ENCODE measurements at regions of chr21 and their contacts with region 1.

Region 1: DNA sequence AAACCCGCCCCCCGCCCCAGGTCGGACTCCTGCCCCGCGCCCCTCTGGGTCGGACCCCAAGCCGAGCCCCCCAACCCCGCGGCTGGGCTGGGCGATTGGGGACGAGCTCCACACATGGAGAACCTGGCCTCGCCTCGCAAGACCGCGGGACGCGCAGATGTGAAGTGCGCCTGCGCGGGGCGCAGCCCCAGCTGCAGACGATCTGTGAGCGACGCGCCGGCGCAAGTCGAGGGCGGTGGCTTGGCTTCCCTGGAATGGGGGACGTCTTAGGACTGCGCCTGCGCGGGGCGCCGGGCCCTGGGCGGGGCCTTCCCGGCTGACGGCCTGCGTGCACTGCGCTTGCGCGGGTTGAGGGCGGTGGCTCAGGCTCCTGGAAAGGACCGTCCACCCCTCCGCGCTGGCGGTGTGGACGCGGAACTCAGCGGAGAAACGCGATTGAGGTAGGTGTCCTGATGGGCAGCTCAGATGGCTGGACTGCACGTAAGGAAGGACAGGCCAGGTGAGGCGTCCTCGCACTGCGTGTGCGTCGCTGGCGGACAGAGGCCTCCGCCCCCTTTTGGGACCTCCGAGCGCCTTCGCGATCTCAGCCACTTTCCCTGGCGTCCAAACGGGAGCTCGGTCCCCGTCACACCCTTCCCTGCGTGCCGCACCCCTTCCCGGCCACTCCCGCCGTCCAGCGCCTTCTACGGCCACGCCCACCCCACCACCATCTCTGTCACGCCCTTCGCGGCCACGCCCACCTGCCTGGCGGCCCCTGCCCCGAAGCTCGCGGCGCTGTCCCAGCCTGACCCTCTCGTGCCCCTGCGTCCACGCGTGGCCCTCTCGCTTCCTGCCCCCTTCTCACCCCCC is at the start of gene PRMT2:
- DNase-seq: peak; percentile 95 to 99 (median 98)
- ATAC-seq: peak; percentile 72 to 74
- H3K4me3 Mint-ChIP-seq: peak within 1 kb of the TSS; percentile 87 to 100 (median 97)
- H3K27ac Mint-ChIP-seq: peak within 1 kb of the TSS; percentile 93 to 100 (median 96)
- H3K4me1 Mint-ChIP-seq: peaks cover 33 to 83% (median 65%) of the 10 kb centered on the region in 4 donors
- H3K27me3 Mint-ChIP-seq: no peaks in the 10 kb centered on the region
- polyA plus RNA-seq, gene PRMT2: 358 to 485 (median 396) TPM

Region 2: DNA sequence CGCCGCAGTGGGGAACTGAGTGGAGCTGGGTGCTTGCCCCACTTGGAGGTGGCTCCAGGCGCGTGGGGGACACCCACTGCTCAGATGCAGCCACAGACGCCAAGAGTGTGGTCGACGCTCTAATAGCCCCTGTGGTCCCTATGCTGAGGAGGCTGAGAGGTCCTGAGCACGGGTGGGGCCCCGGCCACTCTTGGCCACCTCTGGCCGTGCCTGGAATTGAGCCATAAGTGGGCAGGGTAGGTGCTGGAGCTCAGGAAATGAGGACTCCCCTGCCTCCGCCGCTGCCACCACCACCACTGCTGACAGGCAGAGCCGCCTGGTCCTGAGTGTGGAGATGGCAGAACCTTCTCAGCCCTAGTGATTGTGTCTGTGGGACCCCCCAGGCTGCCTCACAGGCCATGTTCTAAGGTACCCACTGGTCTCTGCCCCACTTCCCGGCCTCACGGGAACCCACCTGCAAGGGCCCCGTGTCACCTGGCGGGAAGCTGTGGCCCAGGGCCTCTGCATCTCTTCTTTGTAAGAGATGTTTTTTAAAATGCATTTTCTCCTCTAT is 211.4 kb before region 1 on chr21:
- POLR2A ChIA-PET with region 1: interaction called, 31 read pairs
- DNase-seq: peak in 8 of 10 donors; percentile 25 to 74 (median 50)
- ATAC-seq: peak; percentile 27 to 54
- H3K4me3 Mint-ChIP-seq: peak overlapping the region; percentile 72 to 92 (median 88)
- H3K27ac Mint-ChIP-seq: peak overlapping the region; percentile 94 to 100 (median 99)
- H3K4me1 Mint-ChIP-seq: peaks cover 13 to 46% (median 43%) of the 10 kb centered on the region in 4 donors
- H3K27me3 Mint-ChIP-seq: no peaks in the 10 kb centered on the region

Region 3: DNA sequence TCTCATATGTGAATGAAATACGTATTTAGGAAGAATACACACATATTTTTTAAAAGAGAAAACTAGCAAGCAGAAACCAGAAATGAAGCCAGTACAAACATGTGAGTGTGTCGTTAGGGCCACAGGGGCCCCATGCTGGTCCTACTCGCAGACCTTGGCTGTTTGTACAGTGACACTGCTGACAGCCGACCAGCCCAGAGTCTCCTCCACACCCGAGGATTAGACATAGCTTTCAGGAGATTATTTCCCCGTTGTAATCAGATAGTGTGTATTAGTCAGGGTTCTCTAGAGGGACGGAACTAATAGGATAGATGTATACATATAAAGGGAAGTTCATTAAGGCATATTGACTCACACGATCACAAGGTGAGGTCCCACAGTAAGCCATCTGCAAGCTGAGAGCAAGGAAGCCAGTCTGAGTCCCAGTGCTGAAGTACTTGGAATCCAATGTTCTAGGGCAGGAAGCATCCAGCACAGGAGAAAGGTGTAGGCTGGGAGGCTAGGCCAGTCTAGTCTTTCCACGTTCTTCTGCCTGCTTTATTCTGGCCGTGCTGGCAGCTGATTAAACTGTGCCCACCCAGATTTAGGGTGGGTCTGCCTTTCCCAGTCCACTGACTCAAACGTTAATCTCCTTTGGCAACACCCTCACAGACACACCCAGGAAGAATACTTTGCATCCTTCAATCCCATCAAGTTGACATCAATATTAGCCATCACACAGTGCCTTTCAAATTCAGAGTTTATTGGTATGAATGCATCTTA is 125.6 kb before region 1 on chr21:
- POLR2A ChIA-PET with region 1: no interaction called
- DNase-seq: no peak
- ATAC-seq: no peak
- H3K4me3 Mint-ChIP-seq: no peak overlapping the region
- H3K27ac Mint-ChIP-seq: peak overlapping the region in 5 of 10 donors; percentile 16 to 78 (median 61)
- H3K4me1 Mint-ChIP-seq: peaks cover 0 to 41% (median 11%) of the 10 kb centered on the region in 4 donors
- H3K27me3 Mint-ChIP-seq: no peaks in the 10 kb centered on the region

Region 4: GRCh38 chr21:46532080-46532479 is 103.5 kb before region 1 on chr21:
- POLR2A ChIA-PET with region 1: interaction called, 83 read pairs
- DNase-seq: peak in 9 of 10 donors; percentile 23 to 81 (median 64)
- ATAC-seq: peak; percentile 98
- H3K4me3 Mint-ChIP-seq: peak overlapping the region in 9 of 10 donors; percentile 53 to 83 (median 66)
- H3K27ac Mint-ChIP-seq: peak overlapping the region; percentile 82 to 96 (median 92)
- H3K4me1 Mint-ChIP-seq: peaks cover 22 to 81% (median 69%) of the 10 kb centered on the region in 4 donors
- H3K27me3 Mint-ChIP-seq: no peaks in the 10 kb centered on the region

Region 5: DNA sequence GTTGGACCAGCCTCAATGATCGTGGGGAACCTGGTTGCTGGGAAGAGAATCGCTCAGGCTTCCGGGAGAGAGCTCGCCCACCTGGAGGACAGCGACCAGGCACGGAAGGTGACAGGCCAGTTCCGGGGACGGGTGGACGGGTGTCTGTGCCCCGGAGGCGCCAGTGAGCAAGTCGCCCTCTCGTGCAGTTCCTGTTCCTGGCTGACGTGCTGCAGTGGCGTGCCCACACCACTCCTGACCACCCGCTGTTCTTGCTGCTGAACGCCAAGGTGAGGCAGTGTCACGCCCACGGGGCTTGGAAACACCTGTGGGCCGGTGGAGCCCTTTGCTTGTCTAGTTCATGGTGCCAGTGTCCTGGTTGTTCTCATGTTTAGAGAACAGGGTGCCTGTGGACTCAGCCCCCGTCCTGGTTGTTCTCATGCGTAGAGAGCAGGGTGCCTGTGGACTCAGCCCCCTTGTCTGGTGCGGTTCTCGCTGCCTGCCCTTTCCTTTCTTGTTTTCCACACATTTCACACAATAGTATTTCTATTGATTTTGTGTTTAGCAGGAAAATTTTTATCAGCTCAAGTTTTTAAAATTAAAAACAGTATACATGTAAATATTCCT is 83.8 kb before region 1 on chr21:
- POLR2A ChIA-PET with region 1: interaction called, 681 read pairs
- DNase-seq: peak in 9 of 10 donors; percentile 29 to 73 (median 50)
- ATAC-seq: peak; percentile 27 to 43
- H3K4me3 Mint-ChIP-seq: peak overlapping the region; percentile 62 to 90 (median 85)
- H3K27ac Mint-ChIP-seq: peak overlapping the region; percentile 97 to 100 (median 99)
- H3K4me1 Mint-ChIP-seq: peaks cover 39 to 91% (median 83%) of the 10 kb centered on the region in 4 donors
- H3K27me3 Mint-ChIP-seq: no peaks in the 10 kb centered on the region

Region 6: DNA sequence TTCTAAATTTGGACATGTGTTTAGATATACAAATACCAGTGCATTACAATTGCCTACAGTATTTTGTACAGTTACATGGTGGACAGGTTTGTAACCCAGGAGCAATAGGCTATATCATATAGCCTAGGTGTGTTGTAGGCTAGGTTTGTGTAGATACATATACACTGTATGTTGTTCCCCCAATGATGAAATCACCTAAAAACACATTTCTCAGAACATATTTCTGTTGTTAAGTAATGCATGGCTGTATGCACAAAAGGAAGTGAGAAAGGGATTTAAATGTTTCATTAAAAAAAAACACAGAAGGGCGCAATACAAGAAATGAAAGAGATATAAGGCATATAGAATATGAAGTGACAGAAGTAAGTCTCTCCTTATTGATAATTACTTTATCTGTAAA is 62.7 kb before region 1 on chr21:
- POLR2A ChIA-PET with region 1: interaction called, 681 read pairs
- DNase-seq: no peak
- ATAC-seq: no peak
- H3K4me3 Mint-ChIP-seq: peak overlapping the region in 2 of 10 donors; percentile 2 to 22
- H3K27ac Mint-ChIP-seq: peak overlapping the region in 7 of 10 donors; percentile 1 to 56 (median 43)
- H3K4me1 Mint-ChIP-seq: peaks cover 23 to 72% (median 55%) of the 10 kb centered on the region in 4 donors
- H3K27me3 Mint-ChIP-seq: no peaks in the 10 kb centered on the region

Region 7: DNA sequence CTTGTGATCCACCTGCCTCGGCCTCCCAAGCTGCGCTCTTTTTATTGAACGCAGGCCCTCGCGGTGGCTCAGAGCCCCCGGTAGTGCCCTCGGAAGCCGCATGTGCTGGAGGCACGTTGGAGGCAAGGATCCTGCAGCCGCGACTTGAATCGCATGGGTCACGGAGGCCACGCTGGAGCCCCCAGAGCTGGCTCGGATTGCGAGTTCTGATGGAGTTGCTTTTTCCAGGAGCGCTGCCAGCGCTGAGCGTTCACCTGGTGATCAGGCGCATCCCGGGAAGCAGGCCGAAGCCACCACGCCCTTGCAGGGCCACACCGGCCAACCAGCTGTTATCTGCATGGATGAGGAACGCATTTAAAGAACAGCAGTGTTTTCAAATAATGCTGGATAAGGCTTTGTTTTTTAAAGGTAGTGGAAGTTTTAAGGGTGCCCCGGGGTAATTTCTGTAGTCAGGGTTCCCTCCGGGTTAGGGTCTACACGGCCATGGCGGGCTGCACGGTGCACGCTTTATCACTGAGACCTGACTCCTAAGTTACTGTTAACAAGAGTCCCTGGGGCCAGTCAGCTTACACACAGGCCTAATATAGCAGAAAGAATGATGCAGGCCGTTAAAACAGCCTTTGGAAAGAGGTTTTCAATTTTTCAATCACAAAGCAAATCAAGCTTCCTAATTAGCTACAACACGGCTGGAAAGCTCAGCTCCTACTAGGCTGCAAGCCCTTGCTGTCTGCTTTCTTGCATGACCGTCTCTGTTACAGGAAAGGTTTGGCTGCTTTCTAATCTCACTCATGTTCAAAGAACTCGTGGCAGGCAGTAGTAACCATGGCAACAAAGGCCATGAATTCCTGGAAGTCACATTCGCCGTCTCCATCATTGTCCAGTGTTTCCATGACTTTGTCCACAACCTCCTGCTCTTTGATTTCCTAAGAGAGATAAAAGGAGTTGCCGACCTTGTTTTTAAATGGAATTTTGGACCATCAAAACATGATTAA is 36.7 kb before region 1 on chr21:
- POLR2A ChIA-PET with region 1: interaction called, 168 read pairs
- DNase-seq: peak in 1 of 10 donors; percentile 33
- ATAC-seq: peak; percentile 61 to 62
- H3K4me3 Mint-ChIP-seq: peak overlapping the region in 6 of 10 donors; percentile 1 to 42 (median 36)
- H3K27ac Mint-ChIP-seq: peak overlapping the region; percentile 12 to 92 (median 75)
- H3K4me1 Mint-ChIP-seq: peaks cover 19 to 47% (median 33%) of the 10 kb centered on the region in 4 donors
- H3K27me3 Mint-ChIP-seq: no peaks in the 10 kb centered on the region

Region 8: DNA sequence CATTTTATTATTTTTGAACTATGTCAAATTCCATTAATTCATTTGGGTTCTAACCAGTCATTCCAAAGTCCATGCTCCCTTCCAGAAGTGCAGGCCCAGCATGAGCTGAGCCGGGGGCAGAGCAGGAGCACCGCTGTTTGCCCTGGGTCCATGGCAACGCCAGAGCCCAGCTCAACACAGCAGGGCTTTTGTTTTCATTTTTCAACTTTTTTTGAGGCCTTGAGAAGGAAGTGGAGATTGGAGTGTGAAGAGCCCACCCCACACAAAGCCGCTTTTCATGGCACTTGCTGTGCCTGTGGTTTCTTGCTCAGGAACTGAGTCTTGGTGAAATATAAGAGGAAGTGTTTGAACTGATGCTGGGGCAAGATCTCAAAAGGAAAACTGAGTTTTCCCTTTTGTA is 13.3 kb before region 1 on chr21:
- POLR2A ChIA-PET with region 1: interaction called, 265 read pairs
- DNase-seq: peak; percentile 17 to 88 (median 74)
- ATAC-seq: peak; percentile 73 to 79
- H3K4me3 Mint-ChIP-seq: peak overlapping the region; percentile 53 to 74 (median 66)
- H3K27ac Mint-ChIP-seq: peak overlapping the region; percentile 90 to 100 (median 98)
- H3K4me1 Mint-ChIP-seq: peaks cover 34 to 77% (median 64%) of the 10 kb centered on the region in 4 donors
- H3K27me3 Mint-ChIP-seq: no peaks in the 10 kb centered on the region

Region 9: GRCh38 chr21:46675595-46676280 is 40.2 kb after region 1 on chr21:
- POLR2A ChIA-PET with region 1: no interaction called
- DNase-seq: no peak
- ATAC-seq: no peak
- H3K4me3 Mint-ChIP-seq: no peak overlapping the region
- H3K27ac Mint-ChIP-seq: no peak overlapping the region
- H3K4me1 Mint-ChIP-seq: peaks cover 0 to 3% (median 0%) of the 10 kb centered on the region in 4 donors
- H3K27me3 Mint-ChIP-seq: no peaks in the 10 kb centered on the region

Measured in naive thymus-derived CD8-positive, alpha-beta T cell (primary cell).